Head of caudate nucleus (tissue), 42 donors: ENCODE measurements at regions of chr1 and their contacts with region 1.

Region 1: DNA sequence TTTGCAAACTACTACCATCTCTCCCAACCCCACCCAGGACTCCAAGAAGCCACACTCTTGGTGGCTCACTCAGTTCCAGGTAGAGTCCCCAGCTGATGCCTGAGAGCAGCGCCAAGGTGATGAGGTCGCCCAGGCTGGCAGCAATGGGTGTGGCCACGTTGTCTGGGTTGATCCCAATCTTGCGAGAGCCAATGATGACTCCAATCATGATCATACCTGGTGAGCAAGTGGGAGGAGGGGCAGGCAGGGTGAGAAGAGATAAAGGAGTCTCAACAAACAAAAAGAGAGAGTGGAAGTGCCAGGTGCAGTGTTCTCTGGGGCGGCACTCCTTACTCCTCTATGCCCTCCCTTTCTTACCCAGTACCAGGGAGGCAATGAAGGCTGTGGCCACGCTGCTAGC is 14.4 kb downstream of the SLC41A1 start:
- DNase-seq: no peak

Region 2: GRCh38 chr1:205977402-205978014 is 178.9 kb after region 1 on chr1:
- intact Hi-C with region 1: loop called (anchors 5 kb)
- DNase-seq: peak; percentile 47 to 91 (median 84)